Naive thymus-derived CD8-positive, alpha-beta T cell (primary cell): ENCODE measurements at regions of chr1 and their contacts with region 1.

Region 1: GRCh38 chr1:12124693-12125421 is 41.9 kb upstream of the TNFRSF1B start:
- DNase-seq: peak; percentile 60 to 94 (median 76)
- ATAC-seq: peak; percentile 44 to 67
- H3K4me3 Mint-ChIP-seq: peak overlapping the region in 5 of 10 donors; percentile 2 to 67 (median 34)
- H3K27ac Mint-ChIP-seq: peak overlapping the region in 8 of 10 donors; percentile 14 to 75 (median 48)
- H3K4me1 Mint-ChIP-seq: peaks cover 23 to 45% (median 40%) of the 10 kb centered on the region in 4 donors
- H3K27me3 Mint-ChIP-seq: peaks cover 0 to 19% (median 3%) of the 10 kb centered on the region in 5 donors

Region 2: DNA sequence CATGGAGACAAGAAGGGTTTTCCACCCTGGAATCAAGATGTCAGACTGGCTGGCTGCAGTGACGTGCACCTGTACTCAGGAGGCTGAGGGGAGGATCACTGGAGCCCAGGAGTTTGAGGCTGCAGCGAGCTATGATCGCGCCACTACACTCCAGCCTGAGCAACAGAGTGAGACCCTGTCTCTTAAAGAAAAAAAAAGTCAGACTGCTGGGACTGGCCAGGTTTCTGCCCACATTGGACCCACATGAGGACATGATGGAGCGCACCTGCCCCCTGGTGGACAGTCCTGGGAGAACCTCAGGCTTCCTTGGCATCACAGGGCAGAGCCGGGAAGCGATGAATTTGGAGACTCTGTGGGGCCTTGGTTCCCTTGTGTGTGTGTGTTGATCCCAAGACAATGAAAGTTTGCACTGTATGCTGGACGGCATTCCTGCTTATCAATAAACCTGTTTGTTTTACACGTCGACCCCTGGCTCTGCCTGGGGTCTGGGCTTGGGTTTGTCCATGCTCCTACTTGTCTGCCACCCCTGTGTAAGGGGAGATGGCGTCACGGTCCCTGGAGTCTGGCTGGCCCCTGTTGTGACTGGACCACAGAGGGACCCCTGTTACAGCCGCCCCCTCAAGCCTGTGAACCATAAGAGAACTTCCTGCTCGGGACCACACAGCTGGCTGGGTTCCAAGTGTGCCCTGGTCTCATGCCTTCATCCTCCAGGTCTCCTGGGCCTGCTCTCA is 84.1 kb after region 1 on chr1:
- POLR2A ChIA-PET with region 1: interaction called, 65 read pairs
- DNase-seq: peak; percentile 70 to 90 (median 82)
- ATAC-seq: peak; percentile 75 to 77
- H3K4me3 Mint-ChIP-seq: peak overlapping the region in 8 of 10 donors; percentile 28 to 66 (median 55)
- H3K27ac Mint-ChIP-seq: peak overlapping the region in 9 of 10 donors; percentile 56 to 90 (median 84)
- H3K4me1 Mint-ChIP-seq: peaks cover 16 to 57% (median 54%) of the 10 kb centered on the region in 4 donors
- H3K27me3 Mint-ChIP-seq: no peaks in the 10 kb centered on the region